Ascending aorta (tissue), 2 donors: ENCODE measurements at regions of chr7 and their contacts with region 1.

Region 1: GRCh38 chr7:44797329-44798251 is 1.1 kb downstream of the PPIA start:
- DNase-seq: peak; percentile 78 to 96
- H3K4me3 ChIP-seq: peak overlapping the region; percentile 83 to 95
- H3K27ac ChIP-seq: peak overlapping the region; percentile 99 to 100
- H3K4me1 ChIP-seq: peaks cover 3 to 14% of the 10 kb centered on the region in 2 donors
- H3K27me3 ChIP-seq: no peaks in the 10 kb centered on the region
- CTCF ChIP-seq: peak in 2 of 3 experiments; percentile 46 to 48

Region 2: GRCh38 chr7:43808135-43808809 is 989.3 kb before region 1 on chr7:
- intact Hi-C with region 1: no loop called
- DNase-seq: no peak
- H3K4me3 ChIP-seq: no peak overlapping the region
- H3K27ac ChIP-seq: no peak overlapping the region
- H3K4me1 ChIP-seq: no peaks in the 10 kb centered on the region
- H3K27me3 ChIP-seq: no peaks in the 10 kb centered on the region
- CTCF ChIP-seq: no peak

Region 3: DNA sequence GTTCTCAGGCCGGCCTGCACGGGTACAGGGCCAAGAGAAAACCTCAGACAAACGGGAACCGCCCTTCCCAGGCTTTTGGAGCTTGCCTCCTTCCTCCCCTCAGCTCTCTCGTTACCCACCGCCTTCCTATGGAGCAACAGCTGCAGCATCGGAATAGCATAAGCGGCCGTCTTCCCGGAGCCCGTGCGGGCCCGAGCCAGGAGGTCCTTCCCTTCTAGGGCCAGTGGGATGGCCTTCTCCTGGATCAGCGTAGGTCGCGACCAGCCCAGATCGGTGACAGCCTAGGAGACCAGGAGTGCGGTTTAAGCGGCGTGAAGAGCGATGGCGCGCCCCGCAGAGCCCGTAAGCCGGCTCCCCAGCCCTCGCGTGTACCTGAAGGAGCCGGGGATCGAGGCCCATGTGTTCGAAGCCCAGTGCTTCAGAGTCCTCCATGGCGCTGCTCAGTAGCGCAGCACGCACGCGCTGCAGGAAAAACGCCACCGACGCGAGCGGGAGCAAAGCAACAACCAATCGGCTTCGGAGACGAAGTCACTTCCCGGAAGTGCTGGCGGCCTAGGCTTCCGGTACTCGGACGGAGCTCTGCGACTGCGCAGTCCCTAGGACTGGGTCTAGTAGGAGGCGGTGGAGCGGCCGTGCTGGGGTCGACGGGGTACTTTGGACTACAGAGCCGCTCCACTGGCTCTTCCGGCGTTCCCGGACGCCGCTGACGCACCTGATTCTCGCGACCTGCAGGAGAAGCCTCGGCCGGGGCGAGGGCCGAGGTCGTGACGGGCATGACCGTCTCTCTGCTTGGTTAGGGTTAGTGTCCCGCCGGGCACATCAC is 223.9 kb before region 1 on chr7 and contains the start of gene DDX56:
- intact Hi-C with region 1: loop called (anchors 2 kb)
- DNase-seq: peak; percentile 64 to 96
- H3K4me3 ChIP-seq: peak within 1 kb of the TSS; percentile 87 to 97
- H3K27ac ChIP-seq: peak within 1 kb of the TSS; percentile 89 to 95
- H3K4me1 ChIP-seq: peaks cover 8 to 18% of the 10 kb centered on the region in 2 donors
- H3K27me3 ChIP-seq: no peaks in the 10 kb centered on the region
- CTCF ChIP-seq: no peak
- total RNA-seq, gene DDX56: 51.0 TPM

Region 4: GRCh38 chr7:44606450-44607254 is 190.9 kb before region 1 on chr7 and contains the start of gene OGDH:
- intact Hi-C with region 1: loop called (anchors 1 kb)
- DNase-seq: peak; percentile 95 to 99
- H3K4me3 ChIP-seq: peak within 1 kb of the TSS; percentile 70 to 85
- H3K27ac ChIP-seq: peak within 1 kb of the TSS; percentile 95 to 99
- H3K4me1 ChIP-seq: peaks cover 0 to 7% of the 10 kb centered on the region in 2 donors
- H3K27me3 ChIP-seq: no peaks in the 10 kb centered on the region
- CTCF ChIP-seq: no peak
- total RNA-seq, gene OGDH: 117 TPM

Region 5: GRCh38 chr7:44748045-44748947 is 49.3 kb before region 1 on chr7 and contains the start of gene ZMIZ2:
- intact Hi-C with region 1: loop called (anchors 1 kb)
- DNase-seq: peak; percentile 63 to 94
- H3K4me3 ChIP-seq: peak within 1 kb of the TSS; percentile 81 to 93
- H3K27ac ChIP-seq: peak within 1 kb of the TSS; percentile 88 to 98
- H3K4me1 ChIP-seq: peaks cover 4 to 15% of the 10 kb centered on the region in 2 donors
- H3K27me3 ChIP-seq: no peaks in the 10 kb centered on the region
- CTCF ChIP-seq: no peak
- total RNA-seq, gene ZMIZ2: 75.5 TPM

Region 6: DNA sequence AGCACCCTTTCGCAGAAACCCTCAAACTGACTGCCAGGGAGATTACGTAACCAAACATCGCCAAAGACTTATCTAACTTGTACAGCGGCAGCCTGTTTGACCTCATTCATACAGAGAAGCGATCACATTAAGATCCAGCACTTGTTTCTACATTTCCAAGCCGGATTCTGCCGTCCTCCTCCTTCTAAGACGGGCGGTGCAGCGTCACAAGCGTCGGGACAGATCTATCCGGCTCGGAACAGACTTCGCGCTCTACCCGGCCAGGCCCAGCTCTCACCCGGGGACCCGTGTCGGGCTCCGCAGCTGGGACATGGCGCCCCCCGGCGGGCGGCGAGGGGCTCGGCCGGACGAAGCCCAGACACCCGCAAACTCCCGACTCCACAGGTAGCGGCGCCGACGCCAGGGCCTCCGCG is 49.9 kb after region 1 on chr7:
- intact Hi-C with region 1: loop called (anchors 1 kb)
- DNase-seq: peak; percentile 53 to 92
- H3K4me3 ChIP-seq: peak overlapping the region; percentile 68 to 87
- H3K27ac ChIP-seq: peak overlapping the region; percentile 91 to 94
- H3K4me1 ChIP-seq: peaks cover 3 to 17% of the 10 kb centered on the region in 2 donors
- H3K27me3 ChIP-seq: no peaks in the 10 kb centered on the region
- CTCF ChIP-seq: peak; percentile 89 to 98 (median 92)

Region 7: GRCh38 chr7:44986218-44987053 is 188.8 kb after region 1 on chr7:
- intact Hi-C with region 1: loop called (anchors 1 kb)
- DNase-seq: peak; percentile 58 to 96
- H3K4me3 ChIP-seq: peak overlapping the region; percentile 68
- H3K27ac ChIP-seq: peak overlapping the region; percentile 89 to 90
- H3K4me1 ChIP-seq: peaks cover 6 to 12% of the 10 kb centered on the region in 2 donors
- H3K27me3 ChIP-seq: no peaks in the 10 kb centered on the region
- CTCF ChIP-seq: no peak